PC-9 (cell line): ENCODE measurements at regions of chr9 and their contacts with region 1.

Region 1: DNA sequence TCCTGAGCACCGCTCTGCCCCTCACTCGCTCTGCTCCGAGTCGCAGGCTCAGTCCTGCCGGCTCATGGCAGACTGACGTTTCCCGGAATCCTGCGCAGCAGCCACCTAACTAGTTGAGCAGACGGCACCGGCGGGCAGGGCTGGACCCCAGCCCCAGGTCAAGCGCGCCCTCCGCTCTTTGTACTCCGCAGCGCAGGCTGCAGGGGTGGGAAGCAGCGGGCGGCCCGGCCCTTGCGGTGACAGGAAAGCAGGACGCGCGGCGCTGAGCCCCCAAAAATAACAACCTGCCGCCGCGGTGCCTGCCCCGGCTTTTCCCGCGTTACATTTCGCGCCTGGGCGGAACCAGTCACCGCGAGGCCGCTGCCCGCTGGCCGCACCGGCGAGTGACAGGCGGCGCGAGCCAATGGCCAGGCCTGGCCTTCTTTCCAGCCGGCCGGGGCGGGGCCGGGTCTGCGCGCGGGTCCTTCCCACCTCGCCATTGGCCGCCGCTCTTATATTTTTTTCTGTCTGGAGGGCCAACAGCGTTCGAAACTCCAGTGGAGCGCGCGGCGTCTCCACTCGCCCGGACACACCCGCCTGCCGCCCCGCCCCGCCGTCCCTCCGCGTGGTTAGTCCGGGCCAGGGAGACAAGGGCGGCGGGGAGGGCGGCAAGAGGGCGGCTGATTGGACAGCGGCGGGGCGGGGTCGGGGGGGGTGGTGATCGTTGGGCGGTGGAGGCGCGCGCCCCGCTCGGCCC is at the start of gene ZNF367:
- DNase-seq: peak; percentile 90 to 99
- H3K4me3 ChIP-seq: peak within 1 kb of the TSS; percentile 97
- H3K27ac ChIP-seq: peak within 1 kb of the TSS; percentile 93
- H3K4me1 ChIP-seq: peaks cover 33% of the 10 kb centered on the region
- H3K27me3 ChIP-seq: no peaks in the 10 kb centered on the region
- CTCF ChIP-seq: no peak
- total RNA-seq, gene ZNF367: 12.6 and 14.0 TPM in 2 replicates

Region 2: DNA sequence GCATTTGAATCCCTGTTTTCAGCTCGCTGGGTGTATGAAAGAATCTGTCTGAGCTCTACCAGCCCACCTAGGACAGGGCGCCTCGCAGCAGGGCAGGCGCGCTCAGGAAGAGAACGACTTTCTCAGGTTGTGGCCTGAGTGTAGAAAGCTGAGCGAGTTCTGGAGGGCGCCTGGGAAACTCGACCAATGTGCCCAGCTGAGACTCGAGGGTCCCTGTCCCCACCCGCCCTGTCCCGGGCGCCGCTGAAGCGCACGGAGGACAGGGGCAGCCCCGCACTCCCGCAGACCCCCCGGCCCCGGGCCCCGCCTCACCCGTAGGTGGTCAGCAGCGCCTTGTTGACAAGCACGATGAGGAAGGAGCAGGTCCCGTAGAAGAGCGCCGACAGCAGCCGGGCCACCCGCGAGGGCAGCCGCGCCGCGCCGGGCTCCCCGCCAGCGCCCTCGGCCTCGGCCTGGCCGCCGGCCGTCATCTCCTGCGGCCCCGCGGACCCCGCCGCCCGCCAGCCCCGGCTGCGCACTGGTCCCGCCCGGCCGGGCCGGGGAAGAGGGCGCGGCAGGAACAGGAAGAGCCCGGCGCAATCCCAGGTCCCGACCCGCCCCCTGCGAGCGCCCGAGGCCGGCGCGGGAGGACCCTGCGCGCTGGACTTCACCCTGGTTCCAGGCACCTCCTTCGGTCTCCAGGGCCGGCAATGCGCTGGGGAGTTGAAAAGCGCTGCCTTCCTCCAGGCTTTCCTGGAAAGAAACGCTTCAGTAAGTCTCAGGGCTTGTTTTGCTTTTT is 34.9 kb before region 1 on chr9 and contains the start of gene SLC35D2:
- CTCF ChIA-PET with region 1: no interaction called
- POLR2A ChIA-PET with region 1: no interaction called
- intact Hi-C with region 1: loop called (anchors 5 kb)
- DNase-seq: peak; percentile 54 to 78
- H3K4me3 ChIP-seq: peak within 1 kb of the TSS; percentile 58
- H3K27ac ChIP-seq: peak within 1 kb of the TSS; percentile 36
- H3K4me1 ChIP-seq: peaks cover 19% of the 10 kb centered on the region
- H3K27me3 ChIP-seq: no peaks in the 10 kb centered on the region
- CTCF ChIP-seq: no peak
- total RNA-seq, gene SLC35D2: 27.6 and 34.4 TPM in 2 replicates

Region 3: DNA sequence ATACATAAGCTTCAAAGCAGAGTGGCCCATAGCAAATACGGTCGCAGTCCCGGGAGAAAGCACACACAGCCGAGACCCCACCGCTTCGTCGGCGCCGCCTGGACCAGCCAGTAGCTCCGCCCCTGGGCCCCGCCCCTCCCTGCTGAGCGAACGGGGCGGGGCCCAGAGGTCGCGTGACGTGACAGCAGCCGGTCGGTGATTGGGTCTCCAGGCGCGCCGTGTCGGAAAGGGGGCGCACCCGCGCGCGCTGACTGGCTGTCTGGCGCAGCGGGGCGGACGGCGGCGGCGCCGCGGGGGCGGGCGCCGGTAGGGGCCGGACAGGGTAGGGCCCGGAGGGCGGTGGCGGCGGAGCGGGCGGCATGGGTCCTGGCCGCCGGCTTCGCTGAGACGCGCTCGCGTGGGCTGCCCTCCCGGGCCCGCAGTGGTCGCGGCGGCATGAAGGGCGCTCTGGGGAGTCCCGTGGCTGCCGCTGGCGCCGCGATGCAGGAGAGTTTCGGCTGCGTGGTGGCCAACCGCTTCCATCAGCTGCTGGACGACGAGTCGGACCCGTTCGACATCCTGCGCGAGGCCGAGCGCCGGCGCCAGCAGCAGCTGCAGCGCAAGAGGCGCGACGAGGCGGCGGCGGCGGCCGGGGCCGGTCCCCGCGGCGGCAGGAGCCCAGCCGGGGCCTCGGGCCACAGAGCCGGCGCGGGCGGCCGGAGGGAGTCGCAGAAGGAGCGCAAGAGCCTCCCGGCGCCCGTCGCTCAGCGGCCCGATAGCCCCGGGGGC is 31.8 kb after region 1 on chr9 and contains the start of gene HABP4:
- CTCF ChIA-PET with region 1: no interaction called
- POLR2A ChIA-PET with region 1: interaction called, 10 read pairs
- intact Hi-C with region 1: loop called (anchors 2 kb)
- DNase-seq: peak; percentile 74 to 97
- H3K4me3 ChIP-seq: peak within 1 kb of the TSS; percentile 65
- H3K27ac ChIP-seq: no peak within 1 kb of the TSS
- H3K4me1 ChIP-seq: peaks cover 9% of the 10 kb centered on the region
- H3K27me3 ChIP-seq: no peaks in the 10 kb centered on the region
- CTCF ChIP-seq: no peak
- total RNA-seq, gene HABP4: 8.1 and 11.0 TPM in 2 replicates

Region 4: GRCh38 chr9:96566498-96567207 is 148.4 kb after region 1 on chr9:
- CTCF ChIA-PET with region 1: no interaction called
- POLR2A ChIA-PET with region 1: no interaction called
- intact Hi-C with region 1: loop called (anchors 1 kb)
- DNase-seq: peak; percentile 78 to 91
- H3K4me3 ChIP-seq: peak overlapping the region; percentile 88
- H3K27ac ChIP-seq: peak overlapping the region; percentile 92
- H3K4me1 ChIP-seq: peaks cover 31% of the 10 kb centered on the region
- H3K27me3 ChIP-seq: no peaks in the 10 kb centered on the region
- CTCF ChIP-seq: peak; percentile 61

Region 5: GRCh38 chr9:96619491-96620154 is 201.4 kb after region 1 on chr9 and contains the start of gene CDC14B:
- CTCF ChIA-PET with region 1: no interaction called
- POLR2A ChIA-PET with region 1: interaction called, 6 read pairs
- intact Hi-C with region 1: loop called (anchors 1 kb)
- DNase-seq: peak; percentile 96 to 98
- H3K4me3 ChIP-seq: peak within 1 kb of the TSS; percentile 88
- H3K27ac ChIP-seq: peak within 1 kb of the TSS; percentile 67
- H3K4me1 ChIP-seq: peaks cover 36% of the 10 kb centered on the region
- H3K27me3 ChIP-seq: no peaks in the 10 kb centered on the region
- CTCF ChIP-seq: no peak
- total RNA-seq, gene CDC14B: 43.3 and 47.2 TPM in 2 replicates

Region 6: GRCh38 chr9:96654443-96655197 is 236.4 kb after region 1 on chr9:
- CTCF ChIA-PET with region 1: no interaction called
- POLR2A ChIA-PET with region 1: no interaction called
- intact Hi-C with region 1: loop called (anchors 10 kb)
- DNase-seq: peak; percentile 50 to 73
- H3K4me3 ChIP-seq: peak overlapping the region; percentile 84
- H3K27ac ChIP-seq: peak overlapping the region; percentile 66
- H3K4me1 ChIP-seq: peaks cover 17% of the 10 kb centered on the region
- H3K27me3 ChIP-seq: no peaks in the 10 kb centered on the region
- CTCF ChIP-seq: no peak